ENCODE measurements at regions of chr5 and their contacts with region 1.

Region 1: GRCh38 chr5:154405078-154405792 is 40.6 kb upstream of the SAP30L start:
- DNase-seq: peak; percentile 28 to 89
- H3K4me3 ChIP-seq: peak overlapping the region; percentile 42 to 64
- H3K27ac ChIP-seq: no peak overlapping the region
- H3K4me1 ChIP-seq: peaks cover 4 to 5% of the 10 kb centered on the region in 2 donors
- H3K27me3 ChIP-seq: no peaks in the 10 kb centered on the region
- CTCF ChIP-seq: peak; percentile 78 to 92 (median 87)

Region 2: DNA sequence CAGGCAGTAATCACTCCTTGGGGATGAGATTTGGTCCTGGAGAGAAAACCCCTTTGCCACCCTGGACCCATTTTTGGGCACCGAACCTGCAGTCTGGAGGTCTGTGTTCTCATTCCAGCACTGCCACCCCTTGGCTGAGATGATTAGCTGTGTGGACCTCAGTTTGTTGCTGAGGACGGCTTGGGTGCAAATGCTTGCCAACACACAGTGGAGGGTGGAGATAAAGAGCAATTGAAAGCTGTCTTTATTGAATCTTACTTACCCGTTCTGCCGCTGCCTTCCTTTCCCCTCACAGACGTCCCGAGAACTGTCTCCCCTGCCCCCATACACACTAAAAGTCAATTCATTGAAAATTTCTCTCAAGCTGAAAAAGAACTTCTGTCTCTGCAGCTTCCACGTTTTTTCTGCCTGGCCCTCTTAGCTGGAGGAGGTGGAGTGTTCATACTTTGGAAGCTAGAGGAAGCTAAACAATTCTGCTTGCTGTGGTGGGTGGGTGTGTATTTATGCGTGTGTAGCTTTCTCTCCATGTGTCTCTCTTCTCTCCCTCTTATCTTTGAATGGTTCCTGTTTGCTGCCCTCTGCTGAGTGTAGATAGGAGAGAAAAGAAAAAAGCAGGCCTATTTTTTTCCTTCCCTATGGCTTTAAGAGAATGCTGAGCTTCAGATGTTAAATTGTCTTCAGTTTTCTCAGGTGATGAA is 208.1 kb before region 1 on chr5:
- intact Hi-C with region 1: no loop called
- DNase-seq: no peak
- H3K4me3 ChIP-seq: no peak overlapping the region
- H3K27ac ChIP-seq: no peak overlapping the region
- H3K4me1 ChIP-seq: peaks cover 0 to 21% of the 10 kb centered on the region in 2 donors
- H3K27me3 ChIP-seq: no peaks in the 10 kb centered on the region
- CTCF ChIP-seq: no peak

Region 3: GRCh38 chr5:154356020-154356655 is 49.1 kb before region 1 on chr5:
- intact Hi-C with region 1: loop called (anchors 5 kb)
- DNase-seq: no peak
- H3K4me3 ChIP-seq: no peak overlapping the region
- H3K27ac ChIP-seq: peak overlapping the region; percentile 9 to 44
- H3K4me1 ChIP-seq: peaks cover 7 to 38% of the 10 kb centered on the region in 2 donors
- H3K27me3 ChIP-seq: no peaks in the 10 kb centered on the region
- CTCF ChIP-seq: no peak

Measured in ascending aorta (tissue), 2 donors.